Sigmoid colon (tissue), 7 donors: ENCODE measurements at regions of chr18 and their contacts with region 1.

Region 1: GRCh38 chr18:63131106-63131958 is 188.2 kb downstream of the BCL2 start:
- DNase-seq: peak; percentile 73
- H3K4me3 ChIP-seq: no peak overlapping the region
- H3K27ac ChIP-seq: peak overlapping the region in 1 of 4 donors; percentile 31
- H3K4me1 ChIP-seq: peaks cover 0 to 11% (median 9%) of the 10 kb centered on the region in 4 donors
- H3K27me3 ChIP-seq: no peaks in the 10 kb centered on the region
- CTCF ChIP-seq: peak; percentile 23 to 72 (median 63)
- EP300 ChIP-seq: no peak
- POLR2A ChIP-seq: no peak

Region 2: DNA sequence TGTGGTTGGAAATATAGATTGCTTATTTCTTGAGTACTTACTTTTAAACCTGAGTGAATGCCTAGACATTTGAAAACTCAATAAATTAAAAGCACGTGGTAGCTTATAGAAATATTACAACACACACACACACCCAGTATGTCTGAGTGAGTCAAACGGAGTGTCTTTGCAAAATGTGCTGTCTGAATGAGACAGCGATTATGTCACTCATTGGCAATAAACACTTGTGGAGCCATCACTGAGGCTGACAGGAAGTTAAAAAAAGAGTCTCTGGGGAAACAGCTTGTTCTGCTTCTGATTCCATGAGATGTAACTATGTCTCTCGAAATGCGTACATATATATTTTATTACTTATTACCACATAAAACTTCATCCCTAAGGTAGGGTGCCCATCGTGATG is 313.2 kb after region 1 on chr18:
- intact Hi-C with region 1: loop called (anchors 10 kb)
- DNase-seq: no peak
- H3K4me3 ChIP-seq: no peak overlapping the region
- H3K27ac ChIP-seq: peak overlapping the region; percentile 49 to 84 (median 66)
- H3K4me1 ChIP-seq: peaks cover 0 to 49% (median 37%) of the 10 kb centered on the region in 4 donors
- H3K27me3 ChIP-seq: no peaks in the 10 kb centered on the region
- CTCF ChIP-seq: no peak
- EP300 ChIP-seq: peak in 3 of 4 donors; percentile 36 to 72 (median 68)
- POLR2A ChIP-seq: no peak